ENCODE measurements at regions of chr4 and their contacts with region 1.

Region 1: GRCh38 chr4:128831531-128832242 is 22.2 kb downstream of the JADE1 start:
- DNase-seq: no peak
- H3K4me3 ChIP-seq: no peak overlapping the region
- H3K27ac ChIP-seq: no peak overlapping the region
- H3K4me1 ChIP-seq: peaks cover 43% of the 10 kb centered on the region
- H3K27me3 ChIP-seq: no peaks in the 10 kb centered on the region
- CTCF ChIP-seq: no peak
- POLR2A ChIP-seq: no peak

Region 2: GRCh38 chr4:128454281-128455075 is 377.2 kb before region 1 on chr4:
- intact Hi-C with region 1: loop called (anchors 10 kb)
- DNase-seq: peak in 1 of 2 donors; percentile 96
- H3K4me3 ChIP-seq: no peak overlapping the region
- H3K27ac ChIP-seq: peak overlapping the region; percentile 9
- H3K4me1 ChIP-seq: peaks cover 10% of the 10 kb centered on the region
- H3K27me3 ChIP-seq: no peaks in the 10 kb centered on the region
- CTCF ChIP-seq: peak; percentile 45 to 67 (median 58)
- POLR2A ChIP-seq: no peak

Region 3: DNA sequence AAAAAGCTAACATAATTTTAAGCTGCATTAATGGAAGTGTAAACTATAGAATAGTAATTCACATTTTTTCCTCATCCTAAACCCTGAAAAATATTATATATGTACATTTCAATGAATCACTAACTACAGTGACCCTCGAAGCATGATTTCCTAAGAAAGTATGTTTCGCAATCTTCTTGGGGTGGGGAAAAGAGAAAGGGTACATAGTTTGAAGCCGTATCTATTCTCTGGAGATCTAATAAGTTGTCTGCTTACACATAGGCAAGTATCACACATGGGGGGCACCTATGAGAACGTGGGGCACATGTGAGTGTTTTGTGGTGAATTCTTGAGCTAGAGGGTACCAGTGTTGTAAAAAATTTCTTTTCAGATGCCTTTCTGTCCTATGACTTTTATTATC is 49.0 kb after region 1 on chr4:
- intact Hi-C with region 1: no loop called
- DNase-seq: no peak
- H3K4me3 ChIP-seq: no peak overlapping the region
- H3K27ac ChIP-seq: no peak overlapping the region
- H3K4me1 ChIP-seq: no peaks in the 10 kb centered on the region
- H3K27me3 ChIP-seq: no peaks in the 10 kb centered on the region
- CTCF ChIP-seq: no peak
- POLR2A ChIP-seq: no peak

Region 4: GRCh38 chr4:128913228-128913627 is 81.5 kb after region 1 on chr4:
- intact Hi-C with region 1: loop called (anchors 2 kb)
- DNase-seq: no peak
- H3K4me3 ChIP-seq: no peak overlapping the region
- H3K27ac ChIP-seq: no peak overlapping the region
- H3K4me1 ChIP-seq: no peaks in the 10 kb centered on the region
- H3K27me3 ChIP-seq: no peaks in the 10 kb centered on the region
- CTCF ChIP-seq: no peak
- POLR2A ChIP-seq: no peak

Region 5: DNA sequence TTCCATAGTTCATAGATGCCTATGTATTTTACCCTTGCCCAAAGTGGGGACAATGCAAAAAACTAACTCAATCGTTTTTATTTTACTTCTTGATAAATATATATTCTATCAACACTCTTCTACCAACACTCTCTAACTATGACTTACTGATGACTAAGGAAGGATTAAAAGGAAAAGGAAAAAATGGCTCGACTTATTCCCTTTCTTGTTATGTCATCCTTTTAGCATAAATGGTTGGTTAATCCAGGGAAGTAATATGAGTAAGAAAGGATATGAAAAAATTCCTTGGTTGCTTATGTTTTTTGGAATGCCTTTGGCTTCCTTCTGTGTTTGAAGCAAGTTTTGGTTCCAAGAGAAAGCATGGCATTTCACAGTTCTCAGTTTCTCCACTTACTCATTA is 1351.4 kb after region 1 on chr4:
- intact Hi-C with region 1: no loop called
- DNase-seq: no peak
- H3K4me3 ChIP-seq: no peak overlapping the region
- H3K27ac ChIP-seq: no peak overlapping the region
- H3K4me1 ChIP-seq: no peaks in the 10 kb centered on the region
- H3K27me3 ChIP-seq: no peaks in the 10 kb centered on the region
- CTCF ChIP-seq: no peak
- POLR2A ChIP-seq: no peak